A673 (cell line): ENCODE measurements at regions of chr9 and their contacts with region 1.

Region 1: GRCh38 chr9:124342776-124343485 is 72.3 kb downstream of the PSMB7 start:
- DNase-seq: peak; percentile 77
- H3K4me3 ChIP-seq: no peak overlapping the region
- H3K27ac ChIP-seq: peak overlapping the region; percentile 51
- H3K4me1 ChIP-seq: peaks cover 13% of the 10 kb centered on the region
- H3K27me3 ChIP-seq: no peaks in the 10 kb centered on the region
- CTCF ChIP-seq: no peak

Region 2: DNA sequence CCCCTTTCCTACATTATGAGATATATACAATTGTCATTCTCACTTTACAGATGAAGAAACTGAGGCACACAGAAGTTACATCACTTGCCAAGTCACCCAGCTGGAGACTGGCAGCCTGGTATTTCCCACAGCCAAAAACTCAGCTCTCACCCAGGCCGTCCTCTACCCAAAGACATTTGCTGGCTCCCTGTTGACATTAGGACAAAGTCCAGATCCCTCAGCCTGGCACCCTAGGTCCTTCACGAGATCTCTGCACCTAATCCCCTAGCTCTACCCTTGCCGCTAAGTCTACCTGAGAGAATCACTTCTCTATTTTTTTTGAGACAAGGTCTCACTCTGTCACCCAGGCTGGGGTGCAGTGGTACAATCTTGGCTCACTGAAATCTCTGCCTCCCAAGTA is 358.1 kb before region 1 on chr9:
- CTCF ChIA-PET with region 1: no interaction called
- POLR2A ChIA-PET with region 1: no interaction called
- intact Hi-C with region 1: no loop called
- DNase-seq: no peak
- H3K4me3 ChIP-seq: no peak overlapping the region
- H3K27ac ChIP-seq: no peak overlapping the region
- H3K4me1 ChIP-seq: no peaks in the 10 kb centered on the region
- H3K27me3 ChIP-seq: peaks cover 71% of the 10 kb centered on the region
- CTCF ChIP-seq: no peak

Region 3: DNA sequence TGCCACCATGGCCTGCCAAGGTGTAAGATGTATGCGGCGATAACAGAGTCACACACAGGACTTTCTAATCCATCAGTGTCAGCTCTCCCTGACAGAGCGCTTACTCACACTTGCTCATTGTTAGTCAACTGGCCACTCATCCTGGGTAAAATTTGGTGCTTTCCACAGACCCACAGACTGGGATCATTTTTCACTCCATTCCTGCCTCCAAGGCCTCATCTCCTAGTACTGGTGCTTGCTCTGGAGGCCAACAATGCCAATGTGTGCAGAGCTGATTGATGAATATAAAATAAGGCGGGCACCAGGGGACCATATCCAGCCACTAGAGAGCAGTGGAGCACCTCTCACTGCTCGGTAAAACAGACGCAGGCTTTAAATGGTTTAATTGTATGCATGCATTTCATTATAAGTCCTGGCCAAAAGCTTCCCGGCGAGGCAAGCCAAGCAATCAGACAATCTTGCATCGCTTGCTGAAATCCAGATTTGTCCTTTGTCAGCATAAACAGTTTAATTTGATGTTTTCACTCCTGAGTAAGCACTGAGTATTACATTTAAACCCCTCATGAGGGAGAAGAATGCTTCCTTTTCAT is 50.0 kb after region 1 on chr9:
- CTCF ChIA-PET with region 1: no interaction called
- POLR2A ChIA-PET with region 1: no interaction called
- intact Hi-C with region 1: loop called (anchors 5 kb)
- DNase-seq: peak; percentile 89
- H3K4me3 ChIP-seq: no peak overlapping the region
- H3K27ac ChIP-seq: peak overlapping the region; percentile 79
- H3K4me1 ChIP-seq: peaks cover 49% of the 10 kb centered on the region
- H3K27me3 ChIP-seq: no peaks in the 10 kb centered on the region
- CTCF ChIP-seq: peak; percentile 81